ENCODE measurements at regions of chr7 and their contacts with region 1.

Region 1: DNA sequence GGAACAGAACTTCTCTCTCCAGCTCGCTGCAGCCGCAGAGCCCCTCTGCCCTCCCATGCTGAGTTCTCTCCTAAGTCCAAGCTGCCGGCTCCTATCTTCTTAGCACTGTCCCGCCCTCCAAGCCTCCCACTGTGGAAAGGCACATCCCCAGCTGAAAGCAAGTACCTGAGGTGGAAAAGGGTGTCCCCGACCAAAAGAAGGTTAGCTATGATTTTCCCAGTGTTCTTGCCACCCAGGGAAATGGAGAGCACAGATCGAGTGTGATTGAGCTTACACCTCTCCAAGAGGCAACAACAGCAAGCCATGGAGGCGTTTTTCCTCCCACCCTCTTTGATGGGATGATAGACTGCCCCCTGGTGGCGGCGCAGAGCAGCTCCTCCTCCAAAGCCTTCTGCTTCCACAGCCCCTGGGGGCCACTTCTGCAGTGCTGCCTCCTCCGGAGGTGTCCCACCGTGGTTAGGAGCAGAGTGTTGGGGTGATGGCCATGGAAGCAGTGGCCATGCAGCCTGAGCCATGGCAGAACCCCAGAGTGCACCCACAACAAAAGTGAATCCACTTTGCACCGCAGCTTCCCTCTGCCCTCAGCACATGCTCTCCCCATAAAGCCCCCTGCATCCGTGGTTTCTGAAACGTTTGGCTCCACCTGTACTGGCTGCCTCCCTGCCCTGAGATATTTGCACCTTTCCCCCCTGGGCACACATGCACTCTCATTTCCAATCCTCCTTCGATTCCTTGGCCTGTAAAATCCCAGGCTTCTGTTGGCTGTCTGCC is 143.1 kb upstream of the STK17A start:
- DNase-seq: peak; percentile 83
- CTCF ChIP-seq: peak; percentile 75

Region 2: DNA sequence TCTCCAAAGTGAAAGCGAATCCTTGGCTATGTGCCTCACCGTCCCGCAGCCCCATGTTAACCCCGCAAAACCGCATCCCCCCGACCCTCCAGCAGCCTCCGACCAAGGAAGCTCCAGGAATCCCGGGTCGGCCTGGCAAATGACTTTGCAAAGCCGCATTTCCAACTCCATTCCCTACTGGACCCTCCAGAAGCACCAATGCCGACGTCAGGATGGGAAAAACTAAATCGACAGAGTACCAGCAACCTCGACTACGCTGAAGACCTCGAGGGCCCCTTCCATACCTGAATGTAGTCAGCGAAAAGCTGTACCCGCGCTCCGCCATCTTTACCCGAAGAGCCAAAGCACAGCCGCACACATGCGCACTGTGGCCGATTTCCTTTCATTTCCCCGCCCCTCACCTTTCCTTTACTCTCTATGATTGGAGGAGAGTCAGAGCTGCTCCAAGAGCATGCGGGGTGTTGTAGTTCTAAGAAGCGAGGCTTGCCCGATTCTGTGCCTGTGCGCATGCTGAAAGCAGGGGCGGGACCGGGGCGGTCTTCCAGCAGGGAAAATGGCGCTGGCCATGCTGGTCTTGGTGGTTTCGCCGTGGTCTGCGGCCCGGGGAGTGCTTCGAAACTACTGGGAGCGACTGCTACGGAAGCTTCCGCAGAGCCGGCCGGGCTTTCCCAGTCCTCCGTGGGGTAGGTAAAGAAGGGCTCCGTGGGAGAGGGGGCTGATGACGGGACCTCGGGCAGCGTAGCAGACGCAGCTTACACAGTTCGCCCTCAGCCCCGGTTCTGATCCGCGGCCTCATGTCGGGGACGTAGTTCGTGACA is 507.8 kb before region 1 on chr7 and contains the starts of genes MRPL32 and PSMA2:
- in situ Hi-C with region 1: loop called (anchors 25 kb)
- DNase-seq: peak; percentile 93
- CTCF ChIP-seq: no peak